Caco-2 (cell line): ENCODE measurements at regions of chr20 and their contacts with region 1.

Region 1: DNA sequence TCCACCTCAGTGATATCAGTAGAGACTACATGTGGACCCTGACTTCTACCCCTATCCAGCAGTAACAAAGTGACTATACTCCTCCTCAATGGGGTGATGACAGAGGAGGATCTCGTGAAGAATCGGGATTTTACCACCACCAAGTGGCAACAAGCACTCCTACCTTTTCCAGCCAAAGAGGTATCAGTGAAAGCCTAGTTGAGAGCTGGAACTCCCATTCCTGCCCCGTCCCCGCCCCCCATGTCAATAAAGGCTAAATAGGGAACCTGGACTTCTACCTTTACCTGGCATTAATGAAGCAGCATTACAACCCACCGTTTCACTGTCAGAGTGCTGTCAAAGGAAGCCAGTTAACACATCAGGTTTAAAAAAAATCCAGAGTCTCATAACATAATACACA is 45.3 kb downstream of the RNF24 start:
- DNase-seq: peak; percentile 55 to 66
- H3K4me3 ChIP-seq: no peak overlapping the region
- H3K4me3 Mint-ChIP-seq: no peak overlapping the region
- H3K27ac Mint-ChIP-seq: no peak overlapping the region
- H3K4me1 ChIP-seq: peaks cover 14% of the 10 kb centered on the region
- H3K4me1 Mint-ChIP-seq: peaks cover 18% of the 10 kb centered on the region
- H3K27me3 ChIP-seq: no peaks in the 10 kb centered on the region
- H3K27me3 Mint-ChIP-seq: no peaks in the 10 kb centered on the region
- CTCF ChIP-seq: peak in 1 of 2 experiments; percentile 49

Region 2: DNA sequence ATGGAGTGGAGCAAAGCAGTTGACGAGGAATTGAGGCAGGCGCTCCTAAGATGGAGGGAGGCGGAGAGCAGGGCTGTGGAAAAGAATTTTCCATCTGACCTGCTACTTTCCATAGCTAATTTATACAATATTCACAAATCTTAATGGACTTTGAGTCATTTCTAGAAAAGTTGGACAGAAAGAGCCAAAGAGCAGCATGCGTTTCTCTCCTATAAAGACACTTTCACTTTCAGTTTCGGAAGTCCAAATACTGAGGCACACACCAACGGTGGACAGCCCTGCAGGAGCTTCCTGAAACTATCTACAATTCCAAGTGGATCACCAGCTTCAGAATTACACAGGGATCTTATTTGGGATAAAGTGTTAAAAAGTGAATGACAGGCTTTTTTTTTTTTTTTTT is 37.3 kb before region 1 on chr20:
- CTCF ChIA-PET with region 1: no interaction called
- POLR2A ChIA-PET with region 1: interaction called, 3 read pairs
- intact Hi-C with region 1: loop called (anchors 2 kb)
- DNase-seq: no peak
- H3K4me3 ChIP-seq: no peak overlapping the region
- H3K4me3 Mint-ChIP-seq: no peak overlapping the region
- H3K27ac Mint-ChIP-seq: no peak overlapping the region
- H3K4me1 ChIP-seq: no peaks in the 10 kb centered on the region
- H3K4me1 Mint-ChIP-seq: no peaks in the 10 kb centered on the region
- H3K27me3 ChIP-seq: no peaks in the 10 kb centered on the region
- H3K27me3 Mint-ChIP-seq: no peaks in the 10 kb centered on the region
- CTCF ChIP-seq: no peak